ENCODE measurements at regions of chr11 and their contacts with region 1.

Region 1: GRCh38 chr11:108586600-108586999 is 7.0 kb downstream of the EXPH5 start:
- DNase-seq: peak; percentile 11
- H3K4me3 Mint-ChIP-seq: peak overlapping the region; percentile 9
- H3K27ac Mint-ChIP-seq: no peak overlapping the region
- H3K4me1 Mint-ChIP-seq: peaks cover 12% of the 10 kb centered on the region
- H3K27me3 Mint-ChIP-seq: no peaks in the 10 kb centered on the region
- CTCF ChIP-seq: no peak

Region 2: GRCh38 chr11:108551651-108552462 is 34.7 kb before region 1 on chr11:
- CTCF ChIA-PET with region 1: no interaction called
- intact Hi-C with region 1: loop called (anchors 5 kb)
- DNase-seq: peak; percentile 2
- H3K4me3 Mint-ChIP-seq: no peak overlapping the region
- H3K27ac Mint-ChIP-seq: peak overlapping the region; percentile 11
- H3K4me1 Mint-ChIP-seq: peaks cover 16% of the 10 kb centered on the region
- H3K27me3 Mint-ChIP-seq: no peaks in the 10 kb centered on the region
- CTCF ChIP-seq: no peak

Region 3: DNA sequence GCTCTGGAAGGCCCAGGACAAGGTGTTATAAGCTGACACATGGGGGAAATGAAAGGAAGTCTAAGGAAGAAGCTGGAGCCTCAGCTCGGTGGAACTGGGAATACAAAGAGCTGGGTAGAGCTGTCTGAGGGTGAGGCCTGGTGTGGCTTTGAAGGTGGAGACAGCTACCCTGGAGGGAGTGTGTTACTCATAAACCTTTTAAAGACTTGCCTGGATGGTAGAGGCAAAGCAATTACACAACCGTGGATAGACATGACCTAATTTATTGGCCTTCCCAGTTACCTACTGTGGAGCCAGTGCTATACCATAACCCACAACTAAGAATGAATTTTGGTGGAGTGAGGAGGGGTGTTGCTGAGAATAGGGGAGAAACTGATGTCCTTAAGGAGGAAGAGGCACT is 15.6 kb before region 1 on chr11:
- CTCF ChIA-PET with region 1: no interaction called
- intact Hi-C with region 1: no loop called
- DNase-seq: no peak
- H3K4me3 Mint-ChIP-seq: no peak overlapping the region
- H3K27ac Mint-ChIP-seq: no peak overlapping the region
- H3K4me1 Mint-ChIP-seq: no peaks in the 10 kb centered on the region
- H3K27me3 Mint-ChIP-seq: no peaks in the 10 kb centered on the region
- CTCF ChIP-seq: no peak

Measured in Calu3 (cell line).